ENCODE measurements at regions of chr2 and their contacts with region 1.

Region 1: DNA sequence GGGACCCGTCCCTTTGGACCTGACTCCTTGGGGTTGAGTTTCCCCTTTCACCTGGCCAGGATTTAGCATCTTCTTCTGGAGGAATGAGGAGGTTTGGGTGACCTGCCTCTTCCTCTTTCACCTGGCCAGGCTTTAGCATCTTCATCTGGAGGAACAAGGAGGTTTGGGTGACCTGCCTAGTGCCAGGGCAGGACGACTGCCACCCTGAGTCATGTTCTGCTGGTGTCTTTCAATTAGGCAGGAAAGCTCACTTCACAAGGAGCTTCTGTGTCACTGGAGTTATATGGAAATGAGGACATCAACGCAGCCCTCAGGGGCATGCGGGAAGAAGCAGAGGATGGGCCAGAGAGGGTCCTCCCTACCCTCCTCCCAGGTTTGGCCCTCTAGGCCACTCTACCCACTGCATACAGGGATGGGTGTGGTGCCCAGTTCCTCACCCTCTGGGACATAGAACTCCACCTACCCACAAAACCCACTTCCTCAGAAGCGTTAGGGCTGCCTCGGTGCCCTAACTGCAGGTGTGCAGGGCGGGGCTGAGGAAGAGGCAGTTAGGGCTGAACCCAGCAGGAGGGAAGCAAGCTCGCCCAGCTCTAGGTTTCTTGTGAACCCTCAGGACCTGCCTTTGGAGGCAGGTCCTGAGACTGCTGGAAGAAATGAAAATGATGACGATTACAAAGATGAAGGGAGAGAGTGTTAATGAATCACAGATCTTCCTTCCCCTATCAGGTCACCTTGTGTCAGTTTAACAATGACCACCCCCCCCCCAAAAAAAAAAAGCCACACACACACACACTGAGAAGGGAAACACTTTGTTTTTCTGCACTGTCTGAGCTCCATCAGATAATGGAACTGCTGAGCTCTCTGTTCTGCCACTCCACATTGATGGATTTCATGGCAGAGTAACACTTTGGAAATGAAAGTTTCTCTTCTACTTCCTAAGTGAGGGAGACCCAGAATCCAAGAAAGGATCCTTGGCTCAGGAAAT is 71.0 kb downstream of the ARL4C start:
- DNase-seq: peak; percentile 83 to 85
- H3K4me3 ChIP-seq: no peak overlapping the region
- H3K27ac ChIP-seq: peak overlapping the region; percentile 44
- H3K4me1 ChIP-seq: peaks cover 68% of the 10 kb centered on the region
- H3K27me3 ChIP-seq: no peaks in the 10 kb centered on the region
- CTCF ChIP-seq: no peak

Region 2: DNA sequence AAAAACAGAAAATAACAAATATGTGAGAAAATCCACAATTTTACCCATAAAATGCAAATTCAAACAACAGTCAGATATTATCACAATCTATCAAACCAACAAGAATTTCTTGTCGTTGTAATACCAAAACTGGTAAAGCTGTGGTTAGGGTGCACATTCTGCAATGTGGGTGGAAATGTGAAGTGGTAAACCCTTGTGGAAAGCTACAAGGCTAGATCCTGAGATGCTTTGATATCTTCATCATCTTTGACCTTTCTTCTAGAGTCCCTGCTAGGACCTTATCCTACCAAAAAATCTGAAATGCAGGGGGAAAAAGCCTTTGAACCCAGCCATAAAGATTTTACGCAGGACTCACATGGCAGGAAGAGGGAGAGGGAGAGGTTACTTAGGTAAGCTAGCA is 1191.6 kb before region 1 on chr2:
- CTCF ChIA-PET with region 1: interaction called, 10 read pairs
- POLR2A ChIA-PET with region 1: no interaction called
- intact Hi-C with region 1: no loop called
- DNase-seq: no peak
- H3K4me3 ChIP-seq: no peak overlapping the region
- H3K27ac ChIP-seq: no peak overlapping the region
- H3K4me1 ChIP-seq: no peaks in the 10 kb centered on the region
- H3K27me3 ChIP-seq: no peaks in the 10 kb centered on the region
- CTCF ChIP-seq: no peak

Region 3: GRCh38 chr2:234135720-234136221 is 290.1 kb before region 1 on chr2:
- CTCF ChIA-PET with region 1: no interaction called
- POLR2A ChIA-PET with region 1: no interaction called
- intact Hi-C with region 1: loop called (anchors 1 kb)
- DNase-seq: peak; percentile 91 to 93
- H3K4me3 ChIP-seq: no peak overlapping the region
- H3K27ac ChIP-seq: peak overlapping the region; percentile 66
- H3K4me1 ChIP-seq: peaks cover 30% of the 10 kb centered on the region
- H3K27me3 ChIP-seq: no peaks in the 10 kb centered on the region
- CTCF ChIP-seq: peak; percentile 90

Region 4: DNA sequence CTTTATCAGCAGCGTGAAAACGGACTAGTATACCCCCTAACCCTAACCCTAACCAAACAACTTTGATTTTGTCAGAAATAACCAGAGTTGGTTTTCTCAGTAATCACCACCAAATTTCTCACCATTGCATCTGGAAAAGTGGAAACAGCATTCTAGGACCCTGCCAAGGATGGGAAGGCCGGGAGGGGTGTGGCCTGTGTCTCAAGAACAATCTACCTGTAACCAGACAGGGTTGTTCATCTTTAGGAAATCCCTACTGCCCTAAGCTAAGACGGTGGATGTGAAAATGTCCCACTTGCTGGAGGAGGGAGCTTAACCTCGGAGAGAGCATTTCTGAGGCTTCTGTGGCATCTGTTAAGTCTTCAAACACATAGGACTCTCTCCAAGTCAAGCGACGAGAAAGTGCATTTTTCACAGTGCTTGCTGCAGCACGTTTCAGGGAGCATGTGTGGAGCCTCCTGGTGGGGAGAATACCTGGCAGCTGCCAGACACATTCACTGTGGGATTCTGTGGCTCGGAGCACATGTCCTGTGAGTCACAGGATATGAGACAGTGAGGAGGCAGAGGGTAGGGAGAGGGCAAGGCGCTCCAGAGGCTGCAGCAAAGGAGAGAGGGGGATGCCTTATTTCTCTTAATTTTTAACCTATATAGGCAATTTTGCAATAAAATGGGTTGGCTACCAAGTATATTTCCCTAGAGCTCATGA is 167.9 kb before region 1 on chr2:
- CTCF ChIA-PET with region 1: interaction called, 7 read pairs
- POLR2A ChIA-PET with region 1: interaction called, 7 read pairs
- intact Hi-C with region 1: loop called (anchors 1 kb)
- DNase-seq: peak; percentile 92 to 98
- H3K4me3 ChIP-seq: peak overlapping the region; percentile 19; the same call in 1 of the 2 replicates
- H3K27ac ChIP-seq: peak overlapping the region; percentile 88
- H3K4me1 ChIP-seq: peaks cover 61% of the 10 kb centered on the region
- H3K27me3 ChIP-seq: no peaks in the 10 kb centered on the region
- CTCF ChIP-seq: peak; percentile 85

Region 5: GRCh38 chr2:234368861-234369261 is 57.0 kb before region 1 on chr2:
- CTCF ChIA-PET with region 1: interaction called, 15 read pairs
- POLR2A ChIA-PET with region 1: interaction called, 13 read pairs
- intact Hi-C with region 1: loop called (anchors 2 kb)
- DNase-seq: peak; percentile 61 to 82
- H3K4me3 ChIP-seq: no peak overlapping the region
- H3K27ac ChIP-seq: peak overlapping the region; percentile 78
- H3K4me1 ChIP-seq: peaks cover 96% of the 10 kb centered on the region
- H3K27me3 ChIP-seq: no peaks in the 10 kb centered on the region
- CTCF ChIP-seq: 0 out of 2 replicates have a peak, but pooled peaks have one; percentile 14

Region 6: DNA sequence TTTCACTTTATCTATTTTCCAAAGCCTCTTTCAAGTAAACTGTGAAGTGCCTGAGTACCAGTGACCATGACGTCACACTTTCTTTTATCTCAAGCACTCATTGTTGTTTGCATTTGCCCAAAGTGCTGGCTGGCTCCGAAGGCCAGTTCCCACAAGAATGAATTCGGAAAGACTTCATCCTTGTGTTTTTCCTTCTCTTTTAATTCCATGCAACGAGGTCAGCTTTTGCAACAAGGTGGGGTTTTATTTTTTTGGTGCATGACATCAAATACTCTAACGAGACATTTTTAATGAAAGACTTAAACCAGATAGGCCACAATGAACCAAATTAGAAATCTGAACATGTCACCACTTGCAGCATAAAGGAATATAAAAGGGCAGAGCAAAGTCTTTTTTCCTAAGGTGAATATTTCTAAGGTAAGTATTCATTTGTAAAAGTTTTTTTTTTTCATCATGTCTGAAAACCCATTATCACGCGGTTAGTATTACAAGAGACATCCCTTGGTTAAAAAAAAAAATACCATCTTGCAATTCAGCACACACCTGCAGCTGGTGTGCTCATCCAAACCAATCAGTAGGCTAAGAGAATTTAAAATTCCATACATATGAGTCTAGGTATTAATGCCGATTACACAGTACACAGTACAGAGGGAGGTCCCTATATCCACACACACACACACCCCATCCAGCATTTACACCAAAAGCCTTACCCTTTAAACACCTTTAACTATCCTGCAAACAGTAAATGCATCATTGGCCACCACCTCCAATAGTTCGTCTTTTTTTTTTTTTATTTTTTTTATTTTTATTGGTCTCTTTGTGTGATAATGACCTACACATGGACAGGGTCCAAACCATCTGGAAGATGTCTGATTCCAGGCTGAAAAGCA is 68.7 kb after region 1 on chr2:
- CTCF ChIA-PET with region 1: no interaction called
- POLR2A ChIA-PET with region 1: interaction called, 31 read pairs
- intact Hi-C with region 1: loop called (anchors 1 kb)
- DNase-seq: peak; percentile 16 to 83
- H3K4me3 ChIP-seq: peak overlapping the region; percentile 91
- H3K27ac ChIP-seq: peak overlapping the region; percentile 48
- H3K4me1 ChIP-seq: peaks cover 26% of the 10 kb centered on the region
- H3K27me3 ChIP-seq: no peaks in the 10 kb centered on the region
- CTCF ChIP-seq: peak; percentile 21; the same call in 1 of the 2 replicates

Region 7: GRCh38 chr2:235595422-235596010 is 1169.6 kb after region 1 on chr2:
- CTCF ChIA-PET with region 1: interaction called, 19 read pairs
- POLR2A ChIA-PET with region 1: no interaction called
- intact Hi-C with region 1: no loop called
- DNase-seq: peak; percentile 71 to 83
- H3K4me3 ChIP-seq: no peak overlapping the region
- H3K27ac ChIP-seq: no peak overlapping the region
- H3K4me1 ChIP-seq: no peaks in the 10 kb centered on the region
- H3K27me3 ChIP-seq: no peaks in the 10 kb centered on the region
- CTCF ChIP-seq: peak; percentile 98

Measured in PC-9 (cell line).